Activated T-helper 2 cell treated with anti-CD3 and anti-CD28 coated beads, Interferon-gamma antibody, Interleukin-2, Interleukin-4, amounts not matched to agents 10 μg/mL and 5 μg/mL and 100 μg/mL, durations not matched to agents 14 hours and 24 hours and 36 hours (primary cell): ENCODE measurements at regions of chr4 and their contacts with region 1.

Region 1: DNA sequence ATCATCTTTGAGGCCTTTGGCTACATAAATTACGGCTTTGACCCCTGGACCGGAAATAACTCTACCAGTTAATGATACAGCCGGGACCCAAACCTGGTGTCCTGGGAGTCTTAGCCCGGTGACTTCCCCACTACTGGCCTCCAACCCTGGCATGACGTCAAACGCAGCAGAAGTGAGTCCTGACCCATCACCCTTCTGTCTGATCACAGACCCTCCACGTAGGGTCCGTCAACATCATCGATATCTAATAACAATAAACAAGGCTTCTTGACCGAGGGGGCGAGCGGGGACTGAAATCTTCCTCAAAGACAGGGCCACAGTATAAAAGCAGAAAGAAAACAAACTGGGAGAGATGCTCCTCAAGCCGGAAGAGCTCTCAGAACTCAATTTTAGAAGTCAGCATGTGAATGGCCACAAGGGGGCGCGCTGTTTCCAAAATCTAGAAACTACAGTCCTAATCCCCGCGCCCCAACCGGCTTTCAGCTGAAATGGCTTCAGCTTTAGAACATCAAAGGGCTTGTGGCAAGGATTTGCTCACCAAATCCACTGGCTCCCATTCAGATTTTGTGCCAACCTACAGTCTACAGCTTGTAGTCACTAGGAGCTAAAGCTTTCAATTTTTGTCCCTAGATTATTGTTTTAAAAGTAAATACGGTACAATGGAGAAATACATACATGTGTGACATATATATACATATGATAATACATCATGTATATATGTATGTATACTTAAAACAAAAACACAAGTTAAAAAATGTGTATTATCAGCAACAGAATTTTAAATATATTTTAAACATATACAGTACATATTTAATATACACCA is 46.4 kb upstream of the ENPP6 start:
- DNase-seq: peak; percentile 85
- H3K4me3 Mint-ChIP-seq: no peak overlapping the region
- H3K27ac Mint-ChIP-seq: peak overlapping the region; percentile 54
- H3K4me1 Mint-ChIP-seq: peaks cover 54% of the 10 kb centered on the region
- H3K27me3 Mint-ChIP-seq: no peaks in the 10 kb centered on the region

Region 2: GRCh38 chr4:184282251-184282713 is 18.2 kb after region 1 on chr4:
- intact Hi-C with region 1: loop called (anchors 1 kb)
- DNase-seq: peak; percentile 52
- H3K4me3 Mint-ChIP-seq: no peak overlapping the region
- H3K27ac Mint-ChIP-seq: peak overlapping the region; percentile 92
- H3K4me1 Mint-ChIP-seq: peaks cover 63% of the 10 kb centered on the region
- H3K27me3 Mint-ChIP-seq: no peaks in the 10 kb centered on the region

Region 3: GRCh38 chr4:184318852-184319251 is 54.7 kb after region 1 on chr4:
- intact Hi-C with region 1: loop called (anchors 1 kb)
- DNase-seq: peak; percentile 8
- H3K4me3 Mint-ChIP-seq: no peak overlapping the region
- H3K27ac Mint-ChIP-seq: peak overlapping the region; percentile 24
- H3K4me1 Mint-ChIP-seq: peaks cover 44% of the 10 kb centered on the region
- H3K27me3 Mint-ChIP-seq: no peaks in the 10 kb centered on the region

Region 4: GRCh38 chr4:184538023-184538599 is 274.0 kb after region 1 on chr4:
- intact Hi-C with region 1: loop called (anchors 1 kb)
- DNase-seq: peak; percentile 53
- H3K4me3 Mint-ChIP-seq: peak overlapping the region; percentile 85
- H3K27ac Mint-ChIP-seq: peak overlapping the region; percentile 87
- H3K4me1 Mint-ChIP-seq: peaks cover 61% of the 10 kb centered on the region
- H3K27me3 Mint-ChIP-seq: no peaks in the 10 kb centered on the region

Region 5: DNA sequence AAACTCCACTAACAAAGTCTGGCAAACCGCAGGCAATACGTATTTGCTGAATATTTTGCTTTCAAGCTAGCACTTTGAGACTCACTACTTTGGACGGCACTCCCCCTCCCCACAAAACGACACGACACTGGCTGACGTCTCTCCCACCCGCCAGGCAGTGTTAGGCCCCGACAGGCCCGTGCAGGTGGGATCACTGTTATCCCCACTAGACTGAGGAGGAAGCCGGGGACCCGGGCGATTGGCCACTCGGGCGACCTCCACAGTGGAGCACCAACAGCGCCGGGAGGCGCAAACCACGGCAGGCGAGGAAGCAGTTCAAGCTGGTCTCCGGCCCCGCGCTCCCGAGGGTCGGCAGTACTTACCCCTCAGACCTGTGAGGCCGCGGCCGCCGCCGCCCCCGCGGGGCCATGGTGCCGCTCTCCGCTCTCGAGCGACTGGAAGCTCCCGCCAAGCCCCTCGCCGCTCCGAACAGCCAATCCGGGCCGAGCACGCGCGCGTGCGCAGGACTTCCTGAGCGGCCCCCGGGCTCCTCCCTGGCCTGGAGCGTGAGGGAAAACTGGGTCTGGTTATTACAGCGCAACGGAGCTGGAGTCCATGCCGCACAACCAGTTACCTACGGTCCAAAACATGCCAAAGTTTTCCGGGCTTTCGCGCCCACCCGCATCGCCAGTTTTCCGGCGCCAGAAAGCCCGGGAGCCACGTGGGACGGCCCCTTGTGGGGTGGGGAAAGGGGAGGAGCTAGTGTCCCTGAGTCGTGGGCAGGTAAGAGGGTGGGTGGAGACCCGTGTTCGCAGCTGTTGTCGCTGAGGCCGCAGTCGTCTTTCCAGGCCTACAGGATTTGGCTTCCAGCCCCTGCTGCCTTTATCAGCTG is 469.8 kb after region 1 on chr4 and contains the start of gene CENPU:
- intact Hi-C with region 1: loop called (anchors 2 kb)
- DNase-seq: peak; percentile 96
- H3K4me3 Mint-ChIP-seq: peak within 1 kb of the TSS; percentile 93
- H3K27ac Mint-ChIP-seq: peak within 1 kb of the TSS; percentile 87
- H3K4me1 Mint-ChIP-seq: peaks cover 37% of the 10 kb centered on the region
- H3K27me3 Mint-ChIP-seq: no peaks in the 10 kb centered on the region
- total RNA-seq, gene CENPU: 60.9 and 74.2 TPM in 2 replicates